Aorta (tissue), 5 donors: ENCODE measurements at regions of chr16 and their contacts with region 1.

Region 1: GRCh38 chr16:2500918-2501750 is 12.6 kb upstream of the ATP6V0C start:
- DNase-seq: peak; percentile 89 to 93
- ATAC-seq: peak; percentile 92
- H3K4me3 ChIP-seq: no peak overlapping the region
- H3K27ac ChIP-seq: no peak overlapping the region
- H3K4me1 ChIP-seq: no peaks in the 10 kb centered on the region
- H3K27me3 ChIP-seq: no peaks in the 10 kb centered on the region

Region 2: GRCh38 chr16:2340564-2341455 is 160.3 kb before region 1 on chr16 and contains the start of gene ABCA3:
- intact Hi-C with region 1: loop called (anchors 2 kb)
- DNase-seq: peak; percentile 94 to 98
- ATAC-seq: peak; percentile 97
- H3K4me3 ChIP-seq: peak within 1 kb of the TSS; percentile 32 to 79
- H3K27ac ChIP-seq: no peak within 1 kb of the TSS
- H3K4me1 ChIP-seq: no peaks in the 10 kb centered on the region
- H3K27me3 ChIP-seq: no peaks in the 10 kb centered on the region
- total RNA-seq, gene ABCA3: 11.7 to 19.3 TPM

Region 3: DNA sequence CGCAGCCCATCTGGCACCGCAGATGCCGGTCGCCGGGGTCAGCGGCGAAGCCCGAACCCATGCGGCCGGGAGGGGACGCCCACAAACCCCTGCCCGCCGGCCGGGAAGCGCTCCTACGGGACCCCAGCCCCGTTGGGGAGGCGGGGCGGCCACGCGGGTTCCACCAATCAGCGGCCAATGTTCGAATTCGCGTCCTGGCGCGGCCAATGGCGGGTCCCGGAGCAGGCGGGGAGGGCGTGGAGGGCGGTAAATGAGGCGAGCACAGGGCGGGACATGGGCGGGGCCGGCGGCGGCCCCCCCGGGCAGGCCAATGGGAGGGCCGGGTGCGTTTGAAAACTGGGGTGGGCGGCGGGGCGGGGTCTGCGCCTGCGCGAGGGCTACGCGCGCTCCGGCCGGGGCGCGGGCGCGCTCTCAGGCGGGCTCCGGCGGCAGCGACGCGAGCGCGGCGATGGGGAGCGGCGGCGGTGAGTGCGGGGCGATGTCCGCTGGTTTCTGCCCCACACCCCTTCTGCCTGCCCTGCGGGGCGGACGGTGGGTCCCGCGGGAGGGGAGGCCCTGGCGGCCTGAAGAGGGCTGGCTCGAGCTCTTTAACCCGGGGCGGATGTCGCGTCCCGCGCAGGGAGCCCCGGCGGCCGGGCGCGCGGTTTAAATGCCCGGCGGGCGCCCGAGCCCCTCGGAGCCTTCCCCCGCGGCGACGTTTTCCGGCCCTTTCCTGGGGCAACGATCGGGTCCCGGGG is 71.9 kb before region 1 on chr16 and contains the start of gene CCNF:
- intact Hi-C with region 1: loop called in 1 of 2 experiments (anchors 5 kb)
- DNase-seq: peak; percentile 98 to 99
- ATAC-seq: peak; percentile 97
- H3K4me3 ChIP-seq: peak within 1 kb of the TSS; percentile 54 to 61
- H3K27ac ChIP-seq: no peak within 1 kb of the TSS
- H3K4me1 ChIP-seq: no peaks in the 10 kb centered on the region
- H3K27me3 ChIP-seq: no peaks in the 10 kb centered on the region
- total RNA-seq, gene CCNF: 0.91 to 3.6 TPM

Region 4: GRCh38 chr16:2474877-2475412 is 26.2 kb before region 1 on chr16 and contains the start of gene TBC1D24:
- intact Hi-C with region 1: no loop called
- DNase-seq: peak; percentile 91 to 95
- ATAC-seq: peak; percentile 91
- H3K4me3 ChIP-seq: peak within 1 kb of the TSS; percentile 61 to 69
- H3K27ac ChIP-seq: no peak within 1 kb of the TSS
- H3K4me1 ChIP-seq: no peaks in the 10 kb centered on the region
- H3K27me3 ChIP-seq: no peaks in the 10 kb centered on the region
- total RNA-seq, gene TBC1D24: 6.9 to 15.6 TPM